AG04450 (cell line): ENCODE measurements at regions of chr7 and their contacts with region 1.

Region 1: GRCh38 chr7:94301024-94301586 is 93.6 kb upstream of the COL1A2 start:
- DNase-seq: peak; percentile 94
- H3K4me3 ChIP-seq: peak overlapping the region; percentile 44
- H3K27ac ChIP-seq: peak overlapping the region; percentile 98
- H3K27me3 ChIP-seq: no peaks in the 10 kb centered on the region
- CTCF ChIP-seq: peak; percentile 40

Region 2: DNA sequence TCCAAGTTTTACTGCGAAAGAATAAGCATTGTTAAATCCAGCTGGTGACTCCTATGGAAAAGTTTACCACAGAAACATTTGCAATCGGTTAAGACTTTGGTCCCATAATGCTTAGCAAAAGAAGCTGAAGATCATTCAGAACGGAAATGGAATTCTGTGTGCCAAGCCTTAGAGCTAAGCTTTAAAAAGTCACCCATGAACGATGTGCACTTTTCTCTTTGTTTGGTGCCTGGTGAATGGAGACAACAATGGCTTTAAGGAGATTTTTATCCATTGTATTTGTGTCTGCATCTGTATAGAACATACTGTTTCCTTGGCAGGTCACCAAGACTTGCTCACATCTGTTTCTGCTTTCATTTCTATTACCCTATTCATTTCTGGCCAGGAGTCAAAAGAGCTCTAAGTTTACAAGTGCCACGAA is 67.3 kb after region 1 on chr7:
- CTCF ChIA-PET with region 1: interaction called, 12 read pairs
- POLR2A ChIA-PET with region 1: interaction called, 165 read pairs
- DNase-seq: peak; percentile 76
- H3K4me3 ChIP-seq: peak overlapping the region; percentile 36
- H3K27ac ChIP-seq: peak overlapping the region; percentile 87
- H3K27me3 ChIP-seq: no peaks in the 10 kb centered on the region
- CTCF ChIP-seq: no peak

Region 3: DNA sequence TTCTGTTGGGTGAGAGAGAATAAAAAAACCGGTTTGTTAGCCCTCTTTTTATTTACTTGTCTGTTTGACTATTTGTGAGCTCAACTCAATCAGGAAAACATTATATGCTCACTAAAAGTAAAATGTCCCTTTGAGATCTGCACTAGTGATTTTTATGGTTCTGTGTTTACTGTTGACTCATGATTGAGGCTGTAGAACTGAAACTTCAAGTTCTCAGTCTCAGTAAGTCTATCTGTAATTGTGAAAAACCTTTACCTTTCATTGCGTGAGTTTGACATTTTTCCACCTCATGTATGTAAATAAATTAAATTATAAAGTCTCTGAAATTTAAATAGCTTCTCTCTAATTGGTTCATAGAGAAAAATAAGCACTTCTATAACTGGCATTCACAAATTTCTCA is 191.5 kb after region 1 on chr7:
- CTCF ChIA-PET with region 1: no interaction called
- POLR2A ChIA-PET with region 1: no interaction called
- DNase-seq: no peak
- H3K4me3 ChIP-seq: no peak overlapping the region
- H3K27ac ChIP-seq: no peak overlapping the region
- H3K27me3 ChIP-seq: peaks cover 3% of the 10 kb centered on the region
- CTCF ChIP-seq: no peak